ENCODE measurements at regions of chr9 and their contacts with region 1.

Region 1: DNA sequence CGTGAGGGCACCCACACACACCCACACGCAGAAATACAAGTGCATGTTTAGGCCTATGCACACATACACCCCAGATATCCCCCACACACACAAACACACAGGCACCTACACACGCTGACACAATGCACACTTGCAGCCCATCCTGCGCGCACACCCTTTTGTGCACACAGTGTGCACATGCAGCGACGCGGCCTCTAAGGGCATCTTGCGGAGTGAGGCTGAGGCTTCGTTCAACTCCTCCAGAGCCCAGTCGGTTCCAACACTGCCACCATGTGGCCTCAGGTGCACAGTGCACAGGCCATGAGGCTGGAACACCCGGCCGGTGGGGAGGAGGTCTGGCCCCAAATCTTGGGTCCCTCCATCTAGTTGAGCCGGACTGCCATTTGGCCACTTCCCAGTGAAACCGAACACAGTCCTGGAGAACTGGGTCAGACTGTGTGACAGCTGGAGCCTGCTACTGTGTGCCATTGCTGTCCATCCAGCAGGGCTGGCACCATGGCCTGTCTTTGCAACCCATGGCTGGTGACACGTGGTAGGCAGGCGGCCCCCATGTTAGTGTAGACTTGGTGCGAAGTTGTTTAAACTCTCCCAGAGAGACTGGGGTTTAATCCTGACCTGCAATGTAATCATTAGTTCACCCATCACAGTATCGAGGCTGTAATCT is 97.7 kb upstream of the MVB12B start:
- DNase-seq: peak; percentile 57
- ATAC-seq: peak; percentile 100
- H3K4me3 ChIP-seq: no peak overlapping the region
- H3K27ac ChIP-seq: no peak overlapping the region
- H3K4me1 ChIP-seq: no peaks in the 10 kb centered on the region
- H3K27me3 ChIP-seq: peaks cover 58% of the 10 kb centered on the region
- CTCF ChIP-seq: peak; percentile 88
- POLR2A ChIP-seq: no peak
- RAD21 ChIP-seq: peak; percentile 91

Region 2: DNA sequence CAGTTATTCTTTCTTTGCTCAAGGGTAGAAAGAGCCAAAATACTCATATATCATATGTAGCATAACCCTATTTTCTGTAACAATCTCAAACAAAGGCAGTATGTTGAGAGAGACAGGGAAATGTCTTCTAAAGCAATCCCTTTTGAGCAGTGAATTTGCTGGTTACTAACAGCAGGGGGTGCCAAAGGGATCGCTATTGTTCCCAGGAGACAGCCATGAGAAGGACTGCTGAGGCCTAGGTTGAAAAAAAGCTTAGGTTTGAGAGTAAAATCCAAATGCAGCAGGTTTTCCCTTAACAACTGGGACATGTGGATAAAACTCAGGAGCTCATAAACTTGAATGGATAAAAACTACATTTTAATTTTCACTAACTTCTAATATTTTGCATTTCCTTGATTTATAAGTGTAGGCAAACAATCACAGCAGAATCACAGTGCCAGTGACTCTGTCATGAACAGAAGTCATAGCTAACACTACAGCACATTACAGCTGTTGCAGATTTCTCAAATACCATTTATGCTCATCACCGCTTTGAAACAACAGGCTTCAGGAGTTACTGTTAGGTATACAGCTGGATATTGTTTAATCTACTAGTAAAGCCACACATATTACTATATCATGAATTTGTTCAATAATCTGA is 670.3 kb before region 1 on chr9:
- CTCF ChIA-PET with region 1: interaction called, 3 read pairs
- POLR2A ChIA-PET with region 1: no interaction called
- dilution Hi-C with region 1: no loop called
- in situ Hi-C with region 1: loop called (anchors 25 kb)
- intact Hi-C with region 1: loop called (anchors 1 kb)
- DNase-seq: peak; percentile 83
- ATAC-seq: peak; percentile 88
- H3K4me3 ChIP-seq: no peak overlapping the region
- H3K27ac ChIP-seq: no peak overlapping the region; the same call in 1 of the 2 replicates
- H3K4me1 ChIP-seq: peaks cover 3% of the 10 kb centered on the region
- H3K27me3 ChIP-seq: no peaks in the 10 kb centered on the region
- CTCF ChIP-seq: peak; percentile 77
- POLR2A ChIP-seq: no peak
- RAD21 ChIP-seq: peak; percentile 85

Measured in IMR-90 (cell line).